Activated CD8-positive, alpha-beta memory T cell treated with anti-CD3 and anti-CD28 coated beads, Interleukin-2, amount 10 ng/mL, durations not matched to agents 7 days and 5 days (primary cell): ENCODE measurements at regions of chr5 and their contacts with region 1.

Region 1: GRCh38 chr5:150436141-150436680 is 13.3 kb downstream of the RPS14 start:
- DNase-seq: peak; percentile 95
- ATAC-seq: peak; percentile 98
- H3K4me3 Mint-ChIP-seq: peak overlapping the region; percentile 38
- H3K27ac Mint-ChIP-seq: peak overlapping the region; percentile 84
- H3K4me1 Mint-ChIP-seq: peaks cover 13% of the 10 kb centered on the region
- H3K27me3 Mint-ChIP-seq: no peaks in the 10 kb centered on the region

Region 2: DNA sequence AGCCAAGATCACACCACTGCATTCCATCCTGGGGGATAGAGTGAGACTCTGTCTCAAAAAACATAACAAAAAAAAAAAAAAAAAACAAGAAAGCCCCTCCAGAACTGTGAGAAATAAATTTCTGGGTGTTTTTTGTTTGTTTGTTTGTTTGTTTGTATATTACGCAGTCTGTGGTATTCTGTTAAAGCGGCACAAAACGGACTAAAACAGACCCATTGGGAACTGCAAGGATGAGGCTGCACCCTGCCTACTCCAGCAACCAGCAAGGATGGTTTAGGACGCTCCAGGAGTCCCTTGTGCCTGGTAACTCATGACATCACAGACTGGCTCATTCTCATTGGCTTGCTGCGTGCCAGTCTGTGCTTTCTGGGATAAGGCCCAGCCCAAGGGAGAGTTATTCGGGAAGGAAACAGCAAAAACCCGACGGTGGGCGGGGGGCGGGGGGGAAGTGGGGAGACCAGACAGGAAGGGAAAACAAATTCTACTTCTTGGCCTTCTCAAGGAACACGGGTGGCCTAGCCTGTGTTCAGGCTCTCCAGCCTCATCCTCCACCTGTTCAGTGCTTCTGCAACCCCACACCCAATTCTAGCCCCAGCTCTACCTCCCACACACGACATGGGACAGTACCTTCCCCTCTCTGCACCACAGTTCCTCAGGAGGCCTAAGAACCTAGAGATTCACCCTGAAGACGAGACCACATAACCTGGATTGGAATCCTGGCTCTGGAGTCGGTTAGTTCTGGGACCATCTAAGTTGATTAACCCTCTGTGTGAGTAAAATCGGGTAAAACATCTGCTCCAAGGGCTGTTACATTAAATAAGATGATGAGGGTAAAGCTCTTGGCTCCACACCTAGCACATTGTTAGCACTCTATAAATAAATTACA is 26.3 kb before region 1 on chr5:
- CTCF ChIA-PET with region 1: interaction called, 68 read pairs
- DNase-seq: peak; percentile 84
- ATAC-seq: peak; percentile 25
- H3K4me3 Mint-ChIP-seq: peak overlapping the region; percentile 98
- H3K27ac Mint-ChIP-seq: peak overlapping the region; percentile 99
- H3K4me1 Mint-ChIP-seq: peaks cover 39% of the 10 kb centered on the region
- H3K27me3 Mint-ChIP-seq: no peaks in the 10 kb centered on the region

Region 3: DNA sequence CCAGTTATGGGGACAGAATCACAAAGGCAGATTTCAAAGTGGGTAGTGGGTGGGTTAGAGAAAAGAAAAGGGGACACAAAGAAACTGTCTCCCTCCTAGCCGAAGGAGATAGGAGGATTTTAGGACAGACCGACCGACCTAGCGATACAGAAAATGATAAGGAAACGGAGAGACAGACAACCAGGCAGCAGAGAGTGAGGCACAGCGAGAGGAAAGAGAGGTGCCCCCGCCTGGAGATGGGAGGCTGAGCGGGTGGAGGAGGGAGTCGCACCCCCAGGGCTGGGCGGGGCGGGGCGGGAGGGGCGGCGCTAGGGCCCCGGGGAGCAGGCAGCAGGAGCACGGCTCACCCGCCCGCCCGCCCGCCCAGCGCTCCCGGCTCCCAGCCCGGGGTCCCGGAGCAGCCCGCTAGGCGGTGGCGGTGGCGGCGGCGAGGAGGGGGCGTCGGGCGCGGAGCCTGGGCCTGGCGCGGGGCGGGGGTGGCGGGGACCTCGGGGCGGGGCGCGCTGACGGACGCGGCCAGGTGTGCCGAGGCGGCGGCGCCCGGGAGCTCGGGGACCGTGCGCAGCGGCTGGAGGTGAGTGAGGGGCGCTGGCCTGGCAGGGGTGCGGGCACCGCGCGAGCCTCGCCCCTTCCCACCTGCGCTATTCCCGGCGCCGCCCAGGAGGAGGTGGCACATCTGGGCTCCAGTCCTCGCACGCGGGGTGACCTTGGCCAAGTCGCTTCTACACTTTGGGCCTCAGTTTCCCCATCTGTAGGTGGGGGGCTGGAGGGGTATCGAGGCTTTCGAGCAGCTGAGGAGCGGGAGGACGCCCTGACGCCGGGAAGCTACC is 188.3 kb after region 1 on chr5:
- CTCF ChIA-PET with region 1: no interaction called
- DNase-seq: no peak
- ATAC-seq: peak; percentile 63
- H3K4me3 Mint-ChIP-seq: peak overlapping the region; percentile 57
- H3K27ac Mint-ChIP-seq: no peak overlapping the region
- H3K4me1 Mint-ChIP-seq: peaks cover 13% of the 10 kb centered on the region
- H3K27me3 Mint-ChIP-seq: peaks cover 25% of the 10 kb centered on the region

Region 4: GRCh38 chr5:150853561-150853960 is 417.4 kb after region 1 on chr5:
- CTCF ChIA-PET with region 1: no interaction called
- DNase-seq: no peak
- ATAC-seq: no peak
- H3K4me3 Mint-ChIP-seq: no peak overlapping the region
- H3K27ac Mint-ChIP-seq: no peak overlapping the region
- H3K4me1 Mint-ChIP-seq: peaks cover 10% of the 10 kb centered on the region
- H3K27me3 Mint-ChIP-seq: no peaks in the 10 kb centered on the region